Heart left ventricle (tissue), 16 donors: ENCODE measurements at regions of chr11 and their contacts with region 1.

Region 1: GRCh38 chr11:71235719-71236118 is 16.7 kb downstream of the SHANK2 start:
- DNase-seq: no peak
- ATAC-seq: no peak
- H3K4me3 ChIP-seq: no peak overlapping the region
- H3K27ac ChIP-seq: no peak overlapping the region
- H3K4me1 ChIP-seq: peaks cover 0 to 2% (median 0%) of the 10 kb centered on the region in 12 donors
- H3K27me3 ChIP-seq: peaks cover 0 to 28% (median 0%) of the 10 kb centered on the region in 9 donors
- CTCF ChIP-seq: no peak
- POLR2A ChIP-seq: no peak

Region 2: DNA sequence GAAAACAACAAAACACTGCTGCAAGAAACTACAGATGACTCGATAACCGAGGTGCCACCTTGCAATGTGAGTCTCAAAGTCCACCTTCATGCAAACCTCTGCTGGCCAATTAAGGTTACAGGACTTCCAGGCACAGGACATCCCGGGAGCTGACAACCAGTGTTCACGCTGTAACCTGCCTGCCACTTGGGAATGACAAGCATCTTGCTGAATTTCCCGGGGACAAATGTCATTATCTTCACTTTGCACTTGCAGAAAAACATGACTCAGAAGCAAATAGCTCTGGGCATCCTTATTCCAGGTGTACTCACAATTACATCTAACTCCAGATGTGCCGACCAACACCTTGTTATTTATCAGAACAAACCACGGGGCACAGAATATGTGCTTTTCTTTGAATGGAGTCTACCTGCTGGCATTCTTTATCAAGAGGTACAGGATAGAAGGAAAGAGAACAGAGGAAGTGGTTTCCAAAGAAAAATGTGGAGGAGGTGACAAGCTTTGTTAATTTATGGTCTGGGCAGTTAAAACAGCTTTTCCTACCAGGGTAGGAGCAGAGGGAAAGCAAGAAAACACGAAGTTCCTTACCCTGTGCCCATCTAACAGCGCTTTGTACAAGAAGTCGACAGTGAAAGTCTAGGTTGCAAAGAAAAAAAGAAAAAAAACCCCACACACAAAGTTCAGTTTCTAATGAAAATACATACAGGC is 55.7 kb before region 1 on chr11:
- intact Hi-C with region 1: loop called in 1 of 10 experiments (anchors 10 kb)
- DNase-seq: no peak
- ATAC-seq: no peak
- H3K4me3 ChIP-seq: no peak overlapping the region
- H3K27ac ChIP-seq: no peak overlapping the region
- H3K4me1 ChIP-seq: no peaks in the 10 kb centered on the region
- H3K27me3 ChIP-seq: peaks cover 0 to 9% (median 0%) of the 10 kb centered on the region in 9 donors
- CTCF ChIP-seq: no peak
- POLR2A ChIP-seq: no peak

Region 3: DNA sequence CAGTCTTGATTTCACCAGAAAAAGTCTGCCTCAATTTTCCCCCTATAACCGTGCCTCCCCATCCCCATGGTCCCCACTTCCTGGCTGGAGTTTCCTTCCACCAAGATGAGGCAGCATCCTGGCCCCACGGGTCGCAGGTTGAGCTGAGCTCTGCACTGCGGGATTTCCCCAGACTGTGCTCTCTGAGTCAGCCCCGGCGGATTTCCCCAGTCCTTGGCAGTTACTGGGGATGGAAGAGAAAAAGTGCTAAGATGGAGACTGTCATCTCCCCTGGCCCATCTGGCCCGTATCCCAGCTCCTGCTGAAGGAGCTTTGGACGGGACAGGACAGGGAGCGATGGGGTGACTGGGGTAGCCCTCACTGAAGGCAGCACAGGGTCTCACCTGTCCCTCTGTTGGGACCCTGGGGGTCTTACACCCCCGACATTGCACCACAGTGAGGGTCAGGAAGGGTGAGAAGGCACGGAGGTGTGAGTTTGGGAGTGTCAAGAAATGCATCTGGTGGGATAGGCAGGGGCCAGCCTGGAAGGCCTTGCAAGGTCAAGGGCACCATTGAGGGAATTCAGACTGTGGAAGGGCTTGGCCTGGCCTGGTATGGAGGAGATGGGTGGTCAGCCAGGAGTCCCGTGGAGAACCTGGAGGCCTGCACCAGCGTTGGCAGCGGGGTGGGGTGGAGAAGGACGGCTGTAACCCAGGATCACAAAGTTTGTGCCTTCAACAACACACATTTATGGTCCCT is 253.8 kb after region 1 on chr11:
- intact Hi-C with region 1: no loop called
- DNase-seq: peak in 1 of 5 donors; percentile 22
- ATAC-seq: peak in 1 of 4 donors; percentile 73
- H3K4me3 ChIP-seq: no peak overlapping the region
- H3K27ac ChIP-seq: no peak overlapping the region
- H3K4me1 ChIP-seq: peaks cover 0 to 8% (median 0%) of the 10 kb centered on the region in 12 donors
- H3K27me3 ChIP-seq: no peaks in the 10 kb centered on the region
- CTCF ChIP-seq: no peak
- POLR2A ChIP-seq: no peak